Heart right ventricle (tissue), 16 donors: ENCODE measurements at regions of chr5 and their contacts with region 1.

Region 1: DNA sequence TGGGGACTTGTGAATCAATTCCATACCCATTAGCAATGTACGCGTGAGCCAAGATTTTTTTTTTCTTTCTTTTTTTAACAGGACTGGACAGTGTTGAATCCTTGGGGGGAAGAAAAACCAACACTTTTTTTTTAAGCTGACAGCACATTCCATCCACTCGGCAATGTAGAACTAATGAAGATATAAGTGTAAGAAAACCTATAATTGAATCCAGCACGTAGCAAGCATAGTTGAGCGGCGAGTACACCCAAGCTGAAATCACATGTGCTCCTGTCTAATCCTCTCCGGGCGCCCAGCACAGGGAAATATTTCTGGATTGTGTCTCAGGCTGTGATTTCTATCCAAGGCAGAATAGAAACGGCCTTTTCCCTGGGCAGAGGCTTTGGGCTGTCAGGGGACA is 118.2 kb downstream of the BOD1 start:
- DNase-seq: peak in 1 of 2 donors; percentile 22
- ATAC-seq: peak in 7 of 8 donors; percentile 25 to 74 (median 57)
- H3K4me3 ChIP-seq: no peak overlapping the region
- H3K27ac ChIP-seq: peak overlapping the region in 9 of 10 donors; percentile 34 to 82 (median 69)
- H3K4me1 ChIP-seq: peaks cover 8 to 37% (median 31%) of the 10 kb centered on the region in 9 donors
- H3K27me3 ChIP-seq: no peaks in the 10 kb centered on the region
- CTCF ChIP-seq: no peak

Region 2: GRCh38 chr5:173423452-173424117 is 74.7 kb before region 1 on chr5:
- intact Hi-C with region 1: loop called in 1 of 10 experiments (anchors 2 kb)
- DNase-seq: no peak
- ATAC-seq: peak in 4 of 8 donors; percentile 33 to 85 (median 59)
- H3K4me3 ChIP-seq: no peak overlapping the region
- H3K27ac ChIP-seq: peak overlapping the region in 2 of 10 donors; percentile 18 to 45
- H3K4me1 ChIP-seq: no peaks in the 10 kb centered on the region
- H3K27me3 ChIP-seq: no peaks in the 10 kb centered on the region
- CTCF ChIP-seq: no peak

Region 3: GRCh38 chr5:173454754-173455614 is 43.3 kb before region 1 on chr5:
- intact Hi-C with region 1: loop called in 1 of 10 experiments (anchors 5 kb)
- DNase-seq: peak in 1 of 2 donors; percentile 20
- ATAC-seq: peak in 7 of 8 donors; percentile 42 to 77 (median 60)
- H3K4me3 ChIP-seq: no peak overlapping the region
- H3K27ac ChIP-seq: peak overlapping the region; percentile 7 to 77 (median 48)
- H3K4me1 ChIP-seq: peaks cover 0 to 56% (median 26%) of the 10 kb centered on the region in 9 donors
- H3K27me3 ChIP-seq: peaks cover 0 to 3% (median 0%) of the 10 kb centered on the region in 7 donors
- CTCF ChIP-seq: no peak

Region 4: GRCh38 chr5:173536312-173536641 is 38.0 kb after region 1 on chr5:
- intact Hi-C with region 1: loop called in 1 of 10 experiments (anchors 5 kb)
- DNase-seq: no peak
- ATAC-seq: no peak
- H3K4me3 ChIP-seq: no peak overlapping the region
- H3K27ac ChIP-seq: no peak overlapping the region
- H3K4me1 ChIP-seq: peaks cover 0 to 16% (median 0%) of the 10 kb centered on the region in 9 donors
- H3K27me3 ChIP-seq: no peaks in the 10 kb centered on the region
- CTCF ChIP-seq: no peak

Region 5: DNA sequence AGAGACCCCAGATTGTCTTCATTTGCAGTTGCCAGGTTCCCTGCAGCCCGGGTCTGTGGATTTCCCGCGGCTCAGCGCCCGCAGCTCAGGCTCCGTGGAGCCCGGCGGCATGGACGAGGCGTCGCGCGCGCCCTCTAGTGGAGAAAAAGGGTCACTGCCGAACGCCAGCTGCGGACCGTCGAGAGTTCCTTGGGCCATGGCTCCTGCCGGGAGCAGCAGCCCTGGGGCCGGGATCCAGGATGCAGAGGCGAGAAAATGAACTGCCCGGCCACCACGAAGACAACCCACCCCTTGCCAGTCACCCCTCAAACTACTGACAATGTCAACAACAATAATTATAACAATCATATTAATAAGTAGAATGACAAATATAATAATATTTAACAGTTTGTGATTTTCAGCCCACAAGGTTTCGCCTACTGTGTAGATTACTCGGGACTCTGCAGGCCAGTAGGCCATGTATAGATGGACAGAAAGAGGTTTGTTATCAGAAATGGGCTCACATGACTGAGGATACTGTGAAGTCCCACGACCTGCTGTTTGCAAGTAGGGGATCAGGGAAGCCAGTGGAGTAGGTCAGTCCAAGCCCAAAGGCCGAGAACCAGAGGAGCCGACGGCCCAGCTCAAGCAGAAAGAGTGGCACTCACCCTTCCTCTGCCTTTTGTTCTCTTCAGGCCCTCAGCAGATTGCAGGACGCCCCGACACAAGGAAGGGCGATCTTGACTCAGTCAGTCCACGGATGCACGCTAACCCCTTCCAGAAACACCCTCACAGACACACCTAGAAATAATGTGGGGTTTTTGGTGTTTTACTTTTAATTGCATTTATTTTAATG is 75.1 kb after region 1 on chr5:
- intact Hi-C with region 1: loop called in 1 of 10 experiments (anchors 5 kb)
- DNase-seq: peak; percentile 71 to 84
- ATAC-seq: peak; percentile 89 to 96 (median 94)
- H3K4me3 ChIP-seq: peak overlapping the region in 3 of 10 donors; percentile 18 to 30 (median 29)
- H3K27ac ChIP-seq: no peak overlapping the region
- H3K4me1 ChIP-seq: peaks cover 0 to 14% (median 5%) of the 10 kb centered on the region in 9 donors
- H3K27me3 ChIP-seq: peaks cover 0 to 10% (median 0%) of the 10 kb centered on the region in 7 donors
- CTCF ChIP-seq: peak; percentile 93 to 99 (median 97)

Region 6: DNA sequence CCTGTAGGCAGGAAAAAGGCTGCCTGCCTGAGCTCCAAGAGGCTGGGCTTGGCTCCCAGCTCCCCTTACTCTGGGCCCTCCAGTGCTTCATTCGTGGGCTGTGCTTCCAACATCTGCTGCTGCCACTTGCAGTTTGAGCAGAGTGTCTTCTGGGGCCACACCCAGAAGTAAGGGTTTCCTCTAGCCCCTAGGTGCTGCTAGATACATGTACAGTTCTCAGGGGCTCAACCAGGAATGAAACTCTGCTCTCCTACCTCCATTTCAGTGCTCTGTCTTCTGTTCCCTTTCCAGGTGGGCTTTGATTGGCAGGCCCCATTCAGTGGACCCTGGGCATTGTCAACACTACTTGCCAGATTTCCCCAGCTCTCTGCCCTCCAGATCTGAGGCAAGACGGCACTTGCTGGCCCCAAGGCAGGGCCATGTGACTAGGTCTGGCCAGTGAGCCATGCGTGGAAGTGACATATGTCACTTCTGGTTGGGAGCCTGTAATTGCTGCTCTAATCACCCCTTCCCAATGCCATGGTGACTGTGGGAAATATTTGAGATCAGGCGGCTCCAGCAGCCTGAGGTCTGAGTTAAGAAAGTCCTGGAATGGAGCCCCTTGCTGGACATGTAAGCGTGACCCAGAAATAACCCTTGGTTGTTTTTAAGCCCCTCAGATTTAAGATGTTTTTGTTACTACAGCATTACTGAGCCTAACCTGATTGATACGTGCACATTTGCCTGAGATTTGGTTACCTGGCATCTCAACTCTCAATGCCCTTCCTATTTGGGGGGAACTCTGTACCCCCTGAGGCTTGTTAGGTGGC is 127.6 kb after region 1 on chr5:
- intact Hi-C with region 1: no loop called
- DNase-seq: no peak
- ATAC-seq: peak; percentile 44 to 82 (median 62)
- H3K4me3 ChIP-seq: no peak overlapping the region
- H3K27ac ChIP-seq: peak overlapping the region in 2 of 10 donors; percentile 15 to 16
- H3K4me1 ChIP-seq: peaks cover 0 to 16% (median 9%) of the 10 kb centered on the region in 9 donors
- H3K27me3 ChIP-seq: no peaks in the 10 kb centered on the region
- CTCF ChIP-seq: peak in 5 of 9 donors; percentile 13 to 48 (median 39)